Natural killer cell (primary cell): ENCODE measurements at regions of chr19 and their contacts with region 1.

Region 1: DNA sequence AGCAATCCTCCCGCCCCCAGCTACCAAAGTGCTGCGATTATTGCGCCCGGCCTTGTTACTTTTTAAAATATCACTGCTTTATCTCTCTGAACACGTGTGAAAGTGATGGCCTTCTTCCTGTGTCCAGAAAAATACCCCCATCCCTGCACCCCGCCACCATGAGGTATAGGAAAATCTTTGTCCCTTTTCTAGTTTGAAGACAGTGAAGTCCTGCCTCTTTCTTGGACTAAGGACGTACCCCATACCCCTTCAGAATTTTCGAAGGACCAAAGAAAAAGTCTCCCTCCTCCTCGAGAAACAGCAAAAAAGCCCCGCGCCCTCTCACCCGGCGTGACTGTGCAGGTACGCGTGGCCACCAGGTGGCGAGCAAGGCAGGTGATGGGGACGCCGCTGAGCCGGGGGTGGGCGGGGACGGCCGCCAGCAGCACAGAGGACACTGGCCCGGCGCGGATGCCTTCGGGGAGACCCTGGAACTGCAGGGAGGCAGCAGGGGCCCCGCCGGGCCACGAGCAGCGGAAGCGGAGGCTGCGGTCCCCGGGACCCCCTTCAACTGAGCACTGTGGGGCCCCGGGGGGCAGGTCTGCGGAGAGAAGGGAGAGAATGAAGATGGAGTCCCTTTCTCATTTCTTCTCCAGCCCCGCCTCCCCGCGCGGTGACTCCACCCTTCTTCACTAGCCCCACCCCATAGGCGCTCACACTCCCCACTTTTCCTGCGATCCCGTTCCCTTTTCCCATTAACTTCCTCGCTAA is 3.2 kb downstream of the VSIG10L start:
- DNase-seq: peak; percentile 86 to 92
- ATAC-seq: peak; percentile 81 to 87 (median 82)
- H3K4me3 ChIP-seq: peak overlapping the region; percentile 47
- H3K4me3 Mint-ChIP-seq: peak overlapping the region; percentile 87
- H3K27ac ChIP-seq: no peak overlapping the region
- H3K27ac Mint-ChIP-seq: peak overlapping the region; percentile 14 to 87
- H3K4me1 ChIP-seq: peaks cover 23% of the 10 kb centered on the region
- H3K4me1 Mint-ChIP-seq: peaks cover 8 to 26% of the 10 kb centered on the region in 2 donors
- H3K27me3 ChIP-seq: no peaks in the 10 kb centered on the region
- H3K27me3 Mint-ChIP-seq: peaks cover 0 to 16% of the 10 kb centered on the region in 2 donors
- CTCF ChIP-seq: peak; percentile 95

Region 2: DNA sequence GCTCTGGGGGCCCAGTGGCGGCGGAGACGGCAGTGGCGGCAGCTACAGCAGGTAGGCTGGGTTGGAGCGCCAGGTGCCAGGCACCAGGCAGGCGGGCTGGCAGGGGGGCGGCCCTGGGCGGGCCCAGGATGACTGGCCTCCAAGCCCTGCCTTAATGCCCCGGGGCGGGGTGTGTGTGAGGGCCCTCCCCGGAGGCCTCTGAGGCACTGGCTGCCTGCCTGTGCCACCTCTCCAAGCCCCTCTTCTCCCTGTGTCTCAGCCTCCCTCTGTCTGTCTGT is 312.2 kb before region 1 on chr19 and contains the start of gene KLK11:
- intact Hi-C with region 1: no loop called
- DNase-seq: no peak
- ATAC-seq: no peak
- H3K4me3 ChIP-seq: no peak within 1 kb of the TSS
- H3K4me3 Mint-ChIP-seq: no peak within 1 kb of the TSS
- H3K27ac ChIP-seq: no peak within 1 kb of the TSS
- H3K27ac Mint-ChIP-seq: no peak within 1 kb of the TSS
- H3K4me1 ChIP-seq: no peaks in the 10 kb centered on the region
- H3K4me1 Mint-ChIP-seq: no peaks in the 10 kb centered on the region
- H3K27me3 ChIP-seq: peaks cover 5% of the 10 kb centered on the region
- H3K27me3 Mint-ChIP-seq: peaks cover 7 to 32% of the 10 kb centered on the region in 2 donors
- CTCF ChIP-seq: no peak
- total RNA-seq, gene KLK11: not detected

Region 3: DNA sequence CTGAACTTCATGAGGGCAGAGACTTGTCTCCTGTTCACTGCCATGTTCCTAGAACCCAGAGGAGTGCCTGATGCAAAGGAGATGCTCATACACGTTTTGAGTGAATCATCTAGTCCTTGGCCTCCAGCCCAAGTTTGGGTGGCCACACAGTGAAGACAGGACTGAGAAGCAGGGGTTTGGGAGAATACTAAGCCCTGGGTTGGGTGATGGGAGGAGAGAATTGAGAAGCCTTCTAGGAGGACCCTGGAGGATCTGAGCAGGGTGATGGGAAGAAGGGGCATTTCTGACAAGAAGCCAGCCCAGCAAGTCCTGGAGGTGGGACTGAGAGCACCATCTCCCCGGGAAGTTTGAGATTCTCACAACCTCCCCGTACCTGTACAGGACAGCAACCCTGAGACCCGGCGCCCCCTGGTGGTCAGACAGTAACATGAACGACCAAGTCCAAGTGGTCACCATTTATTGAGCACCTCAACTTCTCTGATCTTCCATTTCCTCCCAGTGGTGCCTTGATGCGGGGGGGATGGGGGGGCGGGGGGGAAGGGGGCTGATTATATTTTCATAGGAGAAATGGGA is 241.5 kb before region 1 on chr19:
- intact Hi-C with region 1: no loop called
- DNase-seq: peak; percentile 67 to 78
- ATAC-seq: peak; percentile 59 to 70 (median 61)
- H3K4me3 ChIP-seq: no peak overlapping the region
- H3K4me3 Mint-ChIP-seq: peak overlapping the region; percentile 21
- H3K27ac ChIP-seq: no peak overlapping the region
- H3K27ac Mint-ChIP-seq: peak overlapping the region in 1 of 2 donors; percentile 14
- H3K4me1 ChIP-seq: peaks cover 29% of the 10 kb centered on the region
- H3K4me1 Mint-ChIP-seq: peaks cover 19 to 26% of the 10 kb centered on the region in 2 donors
- H3K27me3 ChIP-seq: no peaks in the 10 kb centered on the region
- H3K27me3 Mint-ChIP-seq: no peaks in the 10 kb centered on the region
- CTCF ChIP-seq: peak; percentile 47

Region 4: GRCh38 chr19:51305479-51305878 is 33.3 kb before region 1 on chr19:
- intact Hi-C with region 1: no loop called
- DNase-seq: no peak
- ATAC-seq: no peak
- H3K4me3 ChIP-seq: no peak overlapping the region
- H3K4me3 Mint-ChIP-seq: no peak overlapping the region
- H3K27ac ChIP-seq: no peak overlapping the region
- H3K27ac Mint-ChIP-seq: no peak overlapping the region
- H3K4me1 ChIP-seq: no peaks in the 10 kb centered on the region
- H3K4me1 Mint-ChIP-seq: no peaks in the 10 kb centered on the region
- H3K27me3 ChIP-seq: peaks cover 5% of the 10 kb centered on the region
- H3K27me3 Mint-ChIP-seq: peaks cover 38 to 65% of the 10 kb centered on the region in 2 donors
- CTCF ChIP-seq: no peak

Region 5: GRCh38 chr19:51407511-51408131 is 68.9 kb after region 1 on chr19:
- intact Hi-C with region 1: loop called (anchors 1 kb)
- DNase-seq: peak in 1 of 2 donors; percentile 66
- ATAC-seq: peak; percentile 63 to 95 (median 79)
- H3K4me3 ChIP-seq: no peak overlapping the region
- H3K4me3 Mint-ChIP-seq: no peak overlapping the region
- H3K27ac ChIP-seq: no peak overlapping the region
- H3K27ac Mint-ChIP-seq: no peak overlapping the region
- H3K4me1 ChIP-seq: peaks cover 17% of the 10 kb centered on the region
- H3K4me1 Mint-ChIP-seq: peaks cover 20 to 40% of the 10 kb centered on the region in 2 donors
- H3K27me3 ChIP-seq: no peaks in the 10 kb centered on the region
- H3K27me3 Mint-ChIP-seq: no peaks in the 10 kb centered on the region
- CTCF ChIP-seq: peak; percentile 62

Region 6: DNA sequence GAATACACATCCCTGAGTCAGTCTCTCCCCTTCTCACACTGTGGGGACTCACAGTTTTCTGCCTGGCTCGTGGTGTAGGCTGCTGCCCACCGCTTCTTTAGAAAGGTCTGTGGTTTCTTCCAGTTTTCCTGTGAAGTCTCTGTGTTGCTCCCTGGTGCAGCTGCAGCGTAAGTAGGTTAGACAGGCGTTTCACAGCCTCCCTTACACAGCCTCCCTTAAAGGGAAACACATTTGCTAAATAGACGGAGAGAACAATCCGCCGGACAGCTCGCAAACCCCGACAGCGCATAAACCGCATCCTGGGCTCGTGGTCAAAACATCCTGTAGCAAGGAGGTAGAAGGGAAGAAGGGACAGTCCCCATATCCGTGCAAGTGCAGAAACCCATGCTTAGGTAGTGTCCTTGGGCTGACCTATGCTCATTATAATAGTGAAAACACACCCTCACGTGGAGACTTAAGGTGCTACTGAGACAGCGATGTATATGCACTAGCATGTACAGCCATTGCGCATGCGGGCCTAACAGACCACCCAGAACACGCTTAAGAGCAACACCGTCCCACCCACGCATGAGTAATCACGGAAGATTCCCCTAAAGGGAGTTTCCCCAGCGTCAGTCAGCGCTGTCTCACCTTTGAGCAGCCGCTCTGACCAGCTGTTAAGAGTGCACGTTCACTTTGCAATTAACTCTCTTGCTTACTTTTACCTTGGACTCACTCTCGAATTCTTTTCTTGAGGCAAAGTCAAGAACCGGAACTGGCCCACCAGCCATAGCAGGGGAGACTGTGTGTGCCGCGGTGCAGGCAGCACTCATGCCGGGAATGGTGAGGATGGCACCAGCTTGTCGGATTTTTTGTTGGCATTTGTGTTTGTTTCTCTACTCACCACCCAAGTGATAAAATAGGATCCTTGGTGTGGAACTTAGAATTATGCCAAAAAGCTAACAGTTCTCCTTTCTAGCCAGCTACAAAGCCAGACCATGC is 103.0 kb after region 1 on chr19:
- intact Hi-C with region 1: loop called (anchors 1 kb)
- DNase-seq: peak; percentile 72 to 91
- ATAC-seq: peak; percentile 81 to 92 (median 81)
- H3K4me3 ChIP-seq: peak overlapping the region; percentile 9
- H3K4me3 Mint-ChIP-seq: peak overlapping the region; percentile 90
- H3K27ac ChIP-seq: peak overlapping the region; percentile 68
- H3K27ac Mint-ChIP-seq: peak overlapping the region; percentile 91 to 92
- H3K4me1 ChIP-seq: peaks cover 38% of the 10 kb centered on the region
- H3K4me1 Mint-ChIP-seq: peaks cover 41 to 45% of the 10 kb centered on the region in 2 donors
- H3K27me3 ChIP-seq: peaks cover 4% of the 10 kb centered on the region
- H3K27me3 Mint-ChIP-seq: peaks cover 8 to 16% of the 10 kb centered on the region in 2 donors
- CTCF ChIP-seq: no peak

Region 7: DNA sequence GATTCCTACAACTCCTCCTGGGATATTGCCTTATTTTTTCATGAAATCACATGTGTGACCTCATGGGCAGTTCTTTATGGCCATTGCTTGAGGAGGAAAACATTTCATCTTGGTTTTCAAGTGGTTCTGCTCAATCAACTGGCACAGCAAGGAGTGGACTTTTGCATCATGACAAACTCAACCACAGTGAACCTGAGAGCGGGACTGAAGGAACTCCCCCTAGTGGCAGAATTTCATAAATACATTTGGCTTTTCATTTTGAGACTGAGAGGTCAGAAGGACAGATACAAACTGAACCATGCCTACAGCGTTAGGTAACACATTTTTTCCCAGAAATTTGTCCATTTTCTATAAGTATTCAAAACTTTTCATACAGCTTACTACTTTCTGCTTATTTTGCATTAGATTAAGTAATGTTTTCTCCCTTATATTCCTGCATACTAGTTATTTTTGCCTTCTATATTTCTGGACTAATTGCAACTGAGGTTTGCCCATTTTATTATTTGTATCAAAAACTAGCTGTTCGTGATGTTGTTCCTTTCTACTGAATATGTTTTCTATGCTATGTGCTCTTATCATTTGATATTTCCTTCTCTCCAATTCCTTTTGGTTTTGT is 176.2 kb after region 1 on chr19:
- intact Hi-C with region 1: loop called (anchors 1 kb)
- DNase-seq: peak in 1 of 2 donors; percentile 73
- ATAC-seq: peak; percentile 60 to 76 (median 63)
- H3K4me3 ChIP-seq: no peak overlapping the region
- H3K4me3 Mint-ChIP-seq: no peak overlapping the region
- H3K27ac ChIP-seq: no peak overlapping the region
- H3K27ac Mint-ChIP-seq: no peak overlapping the region
- H3K4me1 ChIP-seq: no peaks in the 10 kb centered on the region
- H3K4me1 Mint-ChIP-seq: no peaks in the 10 kb centered on the region
- H3K27me3 ChIP-seq: peaks cover 3% of the 10 kb centered on the region
- H3K27me3 Mint-ChIP-seq: peaks cover 15 to 31% of the 10 kb centered on the region in 2 donors
- CTCF ChIP-seq: peak; percentile 79

Region 8: DNA sequence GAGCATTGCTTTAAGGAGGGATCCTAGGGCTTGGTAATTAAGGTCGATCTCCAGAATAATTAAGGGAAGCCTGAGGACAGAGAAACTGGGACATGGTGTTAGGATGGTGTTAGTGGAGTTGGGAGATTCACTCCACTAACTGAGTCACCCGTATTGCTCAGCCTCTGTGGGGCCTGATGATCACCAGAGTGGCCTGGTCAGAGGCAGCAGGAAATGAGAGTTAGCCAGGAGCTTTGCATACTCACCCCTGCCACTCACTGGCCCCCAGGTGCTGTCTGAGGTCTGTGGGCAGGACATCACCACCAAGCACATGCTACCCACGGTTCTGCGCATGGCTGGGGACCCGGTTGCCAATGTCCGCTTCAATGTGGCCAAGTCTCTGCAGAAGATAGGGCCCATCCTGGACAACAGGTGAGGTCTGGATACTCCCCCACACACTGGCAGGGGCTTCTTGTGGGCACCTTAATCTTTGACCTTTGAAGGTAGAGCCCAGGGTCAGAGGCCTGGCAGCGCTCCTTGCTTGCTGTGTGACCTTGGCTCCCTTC is 883.2 kb after region 1 on chr19:
- intact Hi-C with region 1: no loop called
- DNase-seq: no peak
- ATAC-seq: no peak
- H3K4me3 ChIP-seq: no peak overlapping the region
- H3K4me3 Mint-ChIP-seq: no peak overlapping the region
- H3K27ac ChIP-seq: no peak overlapping the region
- H3K27ac Mint-ChIP-seq: no peak overlapping the region
- H3K4me1 ChIP-seq: no peaks in the 10 kb centered on the region
- H3K4me1 Mint-ChIP-seq: peaks cover 7 to 26% of the 10 kb centered on the region in 2 donors
- H3K27me3 ChIP-seq: no peaks in the 10 kb centered on the region
- H3K27me3 Mint-ChIP-seq: no peaks in the 10 kb centered on the region
- CTCF ChIP-seq: no peak